Activated CD8-positive, alpha-beta T cell treated with anti-CD3 and anti-CD28 coated beads, Interleukin-2, amount 10 ng/mL, durations not matched to agents 7 days and 5 days (primary cell): ENCODE measurements at regions of chr7 and their contacts with region 1.

Region 1: GRCh38 chr7:923108-924041 is 31.1 kb downstream of the ADAP1 start:
- DNase-seq: peak; percentile 97
- ATAC-seq: peak; percentile 83
- H3K4me3 Mint-ChIP-seq: peak overlapping the region; percentile 83
- H3K27ac Mint-ChIP-seq: peak overlapping the region; percentile 96
- H3K4me1 Mint-ChIP-seq: peaks cover 47% of the 10 kb centered on the region
- H3K27me3 Mint-ChIP-seq: no peaks in the 10 kb centered on the region

Region 2: GRCh38 chr7:876167-876967 is 47.0 kb before region 1 on chr7 and contains the start of gene GET4:
- CTCF ChIA-PET with region 1: interaction called, 5 read pairs
- POLR2A ChIA-PET with region 1: interaction called, 11 read pairs
- DNase-seq: peak; percentile 97
- ATAC-seq: peak; percentile 89
- H3K4me3 Mint-ChIP-seq: peak within 1 kb of the TSS; percentile 88
- H3K27ac Mint-ChIP-seq: peak within 1 kb of the TSS; percentile 90
- H3K4me1 Mint-ChIP-seq: peaks cover 32% of the 10 kb centered on the region
- H3K27me3 Mint-ChIP-seq: no peaks in the 10 kb centered on the region
- total RNA-seq, gene GET4: 32.2 to 38.3 TPM

Region 3: DNA sequence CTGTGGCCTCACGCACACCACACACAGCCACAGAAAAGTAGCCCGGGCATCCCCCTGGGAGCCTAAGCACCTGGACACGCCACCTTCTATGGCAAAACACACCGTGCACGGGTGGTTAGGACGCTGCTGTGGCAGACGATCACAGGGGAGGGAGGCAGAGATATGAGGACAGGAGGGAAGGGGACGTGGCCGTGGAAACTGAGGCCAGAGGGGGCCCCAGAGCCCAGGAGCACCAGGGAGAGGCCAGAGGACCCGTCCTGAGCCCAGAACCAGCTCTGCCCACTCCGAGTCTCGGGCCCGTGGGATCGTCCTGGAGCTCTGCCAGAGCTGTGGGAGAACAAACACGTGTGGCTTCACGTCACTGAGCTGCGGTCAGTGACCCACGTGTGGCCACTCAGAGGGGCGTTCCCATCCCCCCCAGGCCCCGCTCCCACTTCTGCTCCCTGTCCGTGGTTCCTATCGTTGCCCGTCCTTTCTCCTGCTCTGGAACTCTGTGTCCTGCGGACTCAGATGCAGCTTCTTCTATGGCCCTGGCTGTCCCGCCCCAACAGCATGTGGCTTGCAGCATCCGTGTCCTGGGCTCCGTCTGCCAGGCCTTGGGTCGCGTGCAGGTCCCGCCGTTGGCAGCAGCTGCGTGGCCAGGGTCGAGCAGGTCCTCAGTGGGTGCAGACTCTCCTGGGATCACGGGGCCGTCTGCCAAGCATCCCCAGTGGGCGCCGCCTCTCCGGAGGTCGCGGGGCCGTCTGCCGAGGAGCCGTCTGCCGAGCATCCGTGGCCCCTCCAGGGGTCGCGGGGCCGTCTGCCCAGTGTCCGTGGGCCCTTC is 16.0 kb before region 1 on chr7:
- CTCF ChIA-PET with region 1: interaction called, 12 read pairs
- POLR2A ChIA-PET with region 1: interaction called, 5 read pairs
- DNase-seq: peak; percentile 60
- ATAC-seq: peak; percentile 10
- H3K4me3 Mint-ChIP-seq: no peak overlapping the region
- H3K27ac Mint-ChIP-seq: no peak overlapping the region
- H3K4me1 Mint-ChIP-seq: peaks cover 11% of the 10 kb centered on the region
- H3K27me3 Mint-ChIP-seq: no peaks in the 10 kb centered on the region

Region 4: GRCh38 chr7:952548-953441 is 29.4 kb after region 1 on chr7:
- CTCF ChIA-PET with region 1: interaction called, 4 read pairs
- POLR2A ChIA-PET with region 1: interaction called, 10 read pairs
- DNase-seq: no peak
- ATAC-seq: no peak
- H3K4me3 Mint-ChIP-seq: peak overlapping the region; percentile 29
- H3K27ac Mint-ChIP-seq: no peak overlapping the region
- H3K4me1 Mint-ChIP-seq: peaks cover 17% of the 10 kb centered on the region
- H3K27me3 Mint-ChIP-seq: no peaks in the 10 kb centered on the region

Region 5: GRCh38 chr7:974820-975681 is 51.7 kb after region 1 on chr7 and contains the start of gene COX19:
- CTCF ChIA-PET with region 1: no interaction called
- POLR2A ChIA-PET with region 1: interaction called, 23 read pairs
- DNase-seq: peak; percentile 92
- ATAC-seq: peak; percentile 91
- H3K4me3 Mint-ChIP-seq: peak within 1 kb of the TSS; percentile 93
- H3K27ac Mint-ChIP-seq: peak within 1 kb of the TSS; percentile 92
- H3K4me1 Mint-ChIP-seq: peaks cover 28% of the 10 kb centered on the region
- H3K27me3 Mint-ChIP-seq: no peaks in the 10 kb centered on the region
- total RNA-seq, gene COX19: 16.8 to 18.2 TPM

Region 6: DNA sequence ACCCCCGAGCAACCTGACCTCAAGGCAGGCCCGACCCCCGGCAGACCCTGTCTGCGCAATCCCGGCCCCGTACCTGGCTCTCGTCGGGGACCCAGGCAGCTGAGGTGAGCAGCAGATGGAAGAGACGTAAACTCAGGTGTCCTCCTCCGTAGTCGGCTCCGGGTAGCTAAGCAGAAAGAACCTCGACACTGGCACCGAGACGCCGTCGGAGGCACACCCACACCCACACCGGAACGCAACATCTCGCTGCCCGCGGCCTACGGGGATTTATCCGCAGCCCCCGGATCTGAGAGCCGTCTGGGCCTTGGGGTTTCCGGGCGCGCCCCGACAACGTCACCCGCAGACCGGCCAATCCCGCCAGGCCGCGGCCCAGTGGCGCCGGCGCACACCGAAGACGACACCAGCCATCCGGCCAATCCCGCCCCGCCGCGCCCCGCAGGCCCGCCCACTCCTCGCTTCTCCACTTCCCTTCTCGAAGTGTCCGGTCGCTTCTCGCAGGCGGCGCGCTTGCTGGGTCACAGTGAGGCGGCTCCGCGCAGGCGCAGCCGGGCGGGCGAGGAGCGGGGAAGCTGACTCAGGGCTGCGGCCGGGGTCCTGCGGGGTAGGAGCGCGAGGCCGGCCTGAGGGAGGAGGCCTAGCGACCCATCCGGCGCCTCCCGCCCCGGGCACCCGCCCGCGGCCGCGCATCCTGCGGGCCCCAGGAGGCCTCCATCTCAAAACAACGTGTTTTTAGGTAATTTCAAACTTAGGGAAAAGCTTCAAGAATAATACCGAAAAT is 236.7 kb after region 1 on chr7 and contains the start of gene ZFAND2A:
- CTCF ChIA-PET with region 1: no interaction called
- POLR2A ChIA-PET with region 1: no interaction called
- DNase-seq: peak; percentile 99
- ATAC-seq: peak; percentile 97
- H3K4me3 Mint-ChIP-seq: peak within 1 kb of the TSS; percentile 85
- H3K27ac Mint-ChIP-seq: peak within 1 kb of the TSS; percentile 93
- H3K4me1 Mint-ChIP-seq: peaks cover 28% of the 10 kb centered on the region
- H3K27me3 Mint-ChIP-seq: no peaks in the 10 kb centered on the region
- total RNA-seq, gene ZFAND2A: 25.6 to 26.0 TPM